Calu3 (cell line): ENCODE measurements at regions of chr5 and their contacts with region 1.

Region 1: GRCh38 chr5:126354012-126354857 is 69.0 kb upstream of the GRAMD2B start:
- DNase-seq: peak; percentile 62
- H3K4me3 Mint-ChIP-seq: peak overlapping the region; percentile 68
- H3K27ac Mint-ChIP-seq: peak overlapping the region; percentile 96
- H3K4me1 Mint-ChIP-seq: peaks cover 64% of the 10 kb centered on the region
- H3K27me3 Mint-ChIP-seq: no peaks in the 10 kb centered on the region
- CTCF ChIP-seq: peak; percentile 59

Region 2: GRCh38 chr5:125950012-125950411 is 404.2 kb before region 1 on chr5:
- CTCF ChIA-PET with region 1: no interaction called
- intact Hi-C with region 1: no loop called
- DNase-seq: no peak
- H3K4me3 Mint-ChIP-seq: no peak overlapping the region
- H3K27ac Mint-ChIP-seq: no peak overlapping the region
- H3K4me1 Mint-ChIP-seq: no peaks in the 10 kb centered on the region
- H3K27me3 Mint-ChIP-seq: no peaks in the 10 kb centered on the region
- CTCF ChIP-seq: no peak

Region 3: GRCh38 chr5:126370796-126371718 is 16.8 kb after region 1 on chr5:
- CTCF ChIA-PET with region 1: interaction called, 8 read pairs
- intact Hi-C with region 1: loop called (anchors 1 kb)
- DNase-seq: peak; percentile 69
- H3K4me3 Mint-ChIP-seq: peak overlapping the region; percentile 92
- H3K27ac Mint-ChIP-seq: peak overlapping the region; percentile 97
- H3K4me1 Mint-ChIP-seq: peaks cover 58% of the 10 kb centered on the region
- H3K27me3 Mint-ChIP-seq: no peaks in the 10 kb centered on the region
- CTCF ChIP-seq: peak; percentile 40

Region 4: GRCh38 chr5:126422989-126423788 is 69.0 kb after region 1 on chr5 and contains the start of gene GRAMD2B:
- CTCF ChIA-PET with region 1: interaction called, 11 read pairs
- intact Hi-C with region 1: loop called (anchors 2 kb)
- DNase-seq: peak; percentile 85
- H3K4me3 Mint-ChIP-seq: peak within 1 kb of the TSS; percentile 93
- H3K27ac Mint-ChIP-seq: peak within 1 kb of the TSS; percentile 81
- H3K4me1 Mint-ChIP-seq: peaks cover 13% of the 10 kb centered on the region
- H3K27me3 Mint-ChIP-seq: no peaks in the 10 kb centered on the region
- CTCF ChIP-seq: no peak
- total RNA-seq, gene GRAMD2B: 23.0 and 23.3 TPM in 2 replicates

Region 5: DNA sequence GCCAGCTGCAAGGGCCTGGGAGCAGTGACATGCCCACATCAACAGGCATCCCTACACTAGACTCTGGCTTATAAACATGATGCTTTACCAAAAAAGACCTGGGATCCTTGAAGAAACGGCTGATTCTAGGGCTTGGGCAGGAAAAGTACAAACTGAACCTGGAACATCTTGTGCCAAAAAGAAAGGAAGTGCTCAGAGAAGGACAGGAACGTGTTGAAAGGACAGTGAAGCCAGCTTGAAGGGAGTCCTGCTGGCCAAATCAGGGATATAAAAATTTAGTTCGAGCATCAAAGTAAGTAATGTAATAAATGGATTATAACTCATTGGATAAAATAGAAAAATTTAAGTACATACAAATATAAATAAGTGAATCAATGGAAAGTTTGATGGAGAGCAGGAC is 182.6 kb after region 1 on chr5:
- CTCF ChIA-PET with region 1: interaction called, 17 read pairs
- intact Hi-C with region 1: loop called (anchors 1 kb)
- DNase-seq: no peak
- H3K4me3 Mint-ChIP-seq: no peak overlapping the region
- H3K27ac Mint-ChIP-seq: no peak overlapping the region
- H3K4me1 Mint-ChIP-seq: no peaks in the 10 kb centered on the region
- H3K27me3 Mint-ChIP-seq: no peaks in the 10 kb centered on the region
- CTCF ChIP-seq: no peak

Region 6: DNA sequence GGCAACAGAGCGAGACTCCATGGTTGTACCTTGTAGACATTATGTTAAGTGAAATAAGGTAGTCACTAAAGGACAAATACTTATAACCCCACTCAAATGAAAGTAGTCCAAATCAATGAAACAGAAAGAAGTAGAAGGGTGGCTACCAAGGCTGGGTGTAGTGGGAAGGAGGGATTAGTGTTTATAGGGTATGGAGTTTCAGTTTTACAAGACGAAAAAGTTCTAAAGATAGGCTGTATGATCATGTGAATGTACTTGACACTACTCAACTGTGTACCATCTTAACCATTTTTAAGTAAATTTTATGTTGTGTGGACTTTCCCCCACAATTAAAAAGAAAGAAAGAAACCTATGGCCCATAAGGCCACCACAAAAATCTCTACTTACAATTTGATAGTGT is 208.6 kb after region 1 on chr5:
- CTCF ChIA-PET with region 1: no interaction called
- intact Hi-C with region 1: no loop called
- DNase-seq: no peak
- H3K4me3 Mint-ChIP-seq: no peak overlapping the region
- H3K27ac Mint-ChIP-seq: no peak overlapping the region
- H3K4me1 Mint-ChIP-seq: no peaks in the 10 kb centered on the region
- H3K27me3 Mint-ChIP-seq: no peaks in the 10 kb centered on the region
- CTCF ChIP-seq: no peak

Region 7: DNA sequence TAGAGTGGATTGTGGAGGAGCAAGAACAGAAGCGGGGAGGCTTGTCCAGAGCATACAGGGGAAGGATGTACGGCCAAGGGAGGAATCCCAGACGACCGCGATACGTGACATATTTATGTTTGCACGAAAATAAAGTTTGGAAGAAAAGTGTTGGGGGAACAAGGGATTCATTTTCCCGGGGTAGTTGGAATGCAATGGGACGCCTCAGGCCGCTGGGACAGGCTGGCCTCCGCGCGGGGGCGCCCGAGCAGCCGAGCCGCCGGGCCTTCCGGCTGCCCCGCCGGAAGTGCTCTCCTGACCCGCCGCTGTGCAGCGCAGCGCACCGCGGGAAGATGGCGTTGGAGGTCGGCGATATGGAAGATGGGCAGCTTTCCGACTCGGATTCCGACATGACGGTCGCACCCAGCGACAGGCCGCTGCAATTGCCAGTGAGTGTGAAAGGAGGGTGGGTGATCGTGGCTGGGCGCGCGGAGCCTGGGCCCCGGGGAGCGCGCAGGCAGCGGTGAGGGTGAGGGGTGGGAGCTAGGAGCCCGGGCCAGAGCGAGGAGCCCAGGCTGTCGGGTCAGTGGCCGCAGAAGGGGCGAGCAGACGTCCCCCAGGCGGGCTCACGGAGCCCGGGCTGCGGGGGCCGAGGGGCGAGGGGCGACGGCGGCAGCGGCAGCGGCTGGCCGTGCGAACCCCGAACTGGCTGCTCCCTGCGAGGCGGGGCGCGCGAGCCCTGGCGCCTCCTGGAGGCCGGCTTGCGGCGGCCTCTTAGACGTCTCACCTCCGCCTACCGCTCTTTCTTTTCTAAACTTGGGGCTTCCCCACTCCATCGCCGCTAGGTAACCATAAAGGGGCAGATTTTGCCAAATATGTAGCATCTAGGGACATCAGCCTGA is 246.6 kb after region 1 on chr5 and contains the start of gene PHAX:
- CTCF ChIA-PET with region 1: interaction called, 5 read pairs
- intact Hi-C with region 1: loop called (anchors 5 kb)
- DNase-seq: peak; percentile 94
- H3K4me3 Mint-ChIP-seq: peak within 1 kb of the TSS; percentile 80
- H3K27ac Mint-ChIP-seq: peak within 1 kb of the TSS; percentile 45
- H3K4me1 Mint-ChIP-seq: peaks cover 25% of the 10 kb centered on the region
- H3K27me3 Mint-ChIP-seq: no peaks in the 10 kb centered on the region
- CTCF ChIP-seq: peak; percentile 89
- total RNA-seq, gene PHAX: 60.2 and 63.6 TPM in 2 replicates